ENCODE measurements at regions of chr16 and their contacts with region 1.

Region 1: DNA sequence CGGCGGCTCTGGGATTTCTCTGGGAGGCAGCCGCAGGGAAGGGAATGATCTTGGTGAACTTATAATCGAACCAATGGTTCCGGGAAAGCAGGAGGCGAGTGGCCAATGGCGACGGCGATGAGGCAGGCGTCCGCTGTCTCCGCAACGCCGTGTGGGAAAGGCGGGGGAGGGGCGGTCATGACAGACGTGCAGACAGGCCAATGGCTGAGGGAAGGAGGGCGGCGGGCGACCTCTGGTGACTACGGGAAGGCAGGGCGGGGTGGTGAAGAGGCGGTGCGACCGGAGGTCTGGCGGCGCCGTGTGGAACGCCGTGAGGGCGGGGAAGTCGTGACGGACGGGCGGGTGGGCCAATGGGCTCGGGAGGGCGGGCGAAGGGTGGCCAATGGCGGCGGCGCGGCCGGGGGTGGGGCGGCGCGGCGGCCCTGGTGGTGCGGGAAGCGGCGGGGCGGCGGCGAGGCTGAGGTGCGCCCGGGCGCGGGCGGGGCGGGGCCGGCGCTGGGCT is at the start of gene RAB40C:
- DNase-seq: peak; percentile 97
- H3K4me3 Mint-ChIP-seq: peak within 1 kb of the TSS; percentile 97
- H3K27ac Mint-ChIP-seq: peak within 1 kb of the TSS; percentile 100
- H3K4me1 Mint-ChIP-seq: peaks cover 26% of the 10 kb centered on the region
- H3K27me3 Mint-ChIP-seq: no peaks in the 10 kb centered on the region
- total RNA-seq, gene RAB40C: 14.0 and 15.2 TPM in 2 replicates

Region 2: DNA sequence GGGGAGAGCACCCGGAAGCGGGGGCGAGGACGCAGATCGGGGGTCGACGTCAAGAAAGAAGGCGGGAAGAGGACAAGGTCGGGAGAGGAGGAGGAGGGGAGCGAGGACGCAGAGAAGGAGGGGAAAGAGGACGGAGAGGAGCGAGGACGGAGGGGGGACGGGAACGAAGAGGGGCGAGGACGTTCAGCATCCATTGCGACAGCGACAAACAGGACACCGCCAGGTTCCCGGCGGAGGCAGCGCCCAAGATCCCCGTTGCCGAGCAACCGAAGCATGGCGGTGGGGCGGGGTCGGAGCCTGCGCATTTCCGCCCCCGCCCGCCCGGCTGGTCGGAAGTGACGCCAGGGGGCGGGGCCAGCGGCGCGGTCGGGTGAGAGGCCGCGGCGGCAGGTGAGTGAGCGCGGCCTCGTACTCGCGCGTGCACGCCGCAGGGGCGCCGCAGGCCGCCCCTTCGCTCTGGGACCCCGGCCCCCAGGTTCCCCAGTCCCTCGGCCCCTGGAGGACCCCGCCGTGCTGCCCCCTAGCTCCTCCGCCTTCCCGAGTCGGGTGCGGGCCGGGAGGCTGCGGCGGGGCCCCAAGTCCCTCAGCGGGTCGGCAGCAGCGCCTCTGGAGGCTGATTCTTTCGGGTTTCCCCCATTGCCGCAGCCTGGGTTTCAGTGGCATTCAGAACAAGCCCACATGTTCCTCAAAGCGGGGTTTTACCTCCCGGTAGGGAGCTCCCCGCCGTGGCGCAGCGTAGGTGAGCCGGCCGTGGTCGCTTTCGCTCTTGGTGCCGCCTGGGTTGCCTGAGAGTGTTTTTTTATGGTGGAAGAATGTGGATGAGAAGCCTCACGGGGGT is 355.0 kb before region 1 on chr16 and contains the start of gene FAM234A:
- intact Hi-C with region 1: loop called (anchors 1 kb)
- DNase-seq: peak; percentile 92
- H3K4me3 Mint-ChIP-seq: peak within 1 kb of the TSS; percentile 96
- H3K27ac Mint-ChIP-seq: peak within 1 kb of the TSS; percentile 98
- H3K4me1 Mint-ChIP-seq: peaks cover 14% of the 10 kb centered on the region
- H3K27me3 Mint-ChIP-seq: peaks cover 6% of the 10 kb centered on the region
- total RNA-seq, gene FAM234A: 18.0 and 21.2 TPM in 2 replicates

Region 3: DNA sequence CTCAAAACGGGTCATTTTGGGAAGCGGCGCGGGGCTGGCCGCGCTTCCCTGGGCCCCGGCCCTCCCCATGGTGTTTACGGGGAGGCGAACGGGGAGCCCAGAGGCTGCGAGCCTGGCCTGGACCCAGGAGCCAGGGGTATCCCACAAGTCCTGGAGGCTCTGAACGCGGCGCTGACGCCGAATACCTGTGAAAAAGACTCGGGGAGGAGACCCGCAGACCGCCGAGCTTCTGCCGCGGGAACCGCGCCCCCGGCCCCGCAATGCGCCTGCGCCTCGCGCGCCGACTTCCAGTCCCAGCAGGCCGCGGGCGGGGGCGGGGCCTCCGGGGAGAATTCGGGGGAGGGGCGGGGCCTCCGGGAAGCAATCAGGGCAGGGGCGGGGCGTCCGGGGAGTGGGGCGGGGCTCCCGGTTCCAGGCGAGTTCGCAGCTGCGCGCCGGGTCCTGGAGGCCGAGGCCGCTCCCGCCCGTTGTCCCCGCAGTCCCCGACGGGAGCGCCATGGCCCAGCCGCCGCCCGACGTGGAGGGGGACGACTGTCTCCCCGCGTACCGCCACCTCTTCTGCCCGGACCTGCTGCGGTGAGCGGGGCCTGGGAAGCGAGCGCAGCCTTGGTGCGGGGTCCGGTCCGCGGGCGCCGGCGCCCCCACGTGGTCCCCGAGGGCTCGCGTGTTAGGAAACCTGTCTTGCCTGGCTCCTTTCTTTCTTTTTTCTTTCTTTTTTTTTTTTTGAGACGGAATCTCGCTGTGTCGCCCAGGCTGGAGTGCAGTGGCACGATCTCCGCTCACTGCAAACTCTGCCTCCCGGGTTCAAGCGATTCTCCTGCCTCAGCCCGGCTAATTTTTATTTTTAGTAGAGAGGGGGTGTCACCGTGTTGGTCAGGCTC is 188.0 kb before region 1 on chr16 and contains the start of gene DECR2:
- intact Hi-C with region 1: loop called (anchors 1 kb)
- DNase-seq: peak; percentile 90
- H3K4me3 Mint-ChIP-seq: peak within 1 kb of the TSS; percentile 87
- H3K27ac Mint-ChIP-seq: peak within 1 kb of the TSS; percentile 58
- H3K4me1 Mint-ChIP-seq: peaks cover 11% of the 10 kb centered on the region
- H3K27me3 Mint-ChIP-seq: peaks cover 2% of the 10 kb centered on the region
- total RNA-seq, gene DECR2: 18.0 and 20.1 TPM in 2 replicates

Region 4: GRCh38 chr16:610513-611334 is 21.0 kb after region 1 on chr16:
- intact Hi-C with region 1: no loop called
- DNase-seq: no peak
- H3K4me3 Mint-ChIP-seq: no peak overlapping the region
- H3K27ac Mint-ChIP-seq: no peak overlapping the region
- H3K4me1 Mint-ChIP-seq: no peaks in the 10 kb centered on the region
- H3K27me3 Mint-ChIP-seq: no peaks in the 10 kb centered on the region

Region 5: DNA sequence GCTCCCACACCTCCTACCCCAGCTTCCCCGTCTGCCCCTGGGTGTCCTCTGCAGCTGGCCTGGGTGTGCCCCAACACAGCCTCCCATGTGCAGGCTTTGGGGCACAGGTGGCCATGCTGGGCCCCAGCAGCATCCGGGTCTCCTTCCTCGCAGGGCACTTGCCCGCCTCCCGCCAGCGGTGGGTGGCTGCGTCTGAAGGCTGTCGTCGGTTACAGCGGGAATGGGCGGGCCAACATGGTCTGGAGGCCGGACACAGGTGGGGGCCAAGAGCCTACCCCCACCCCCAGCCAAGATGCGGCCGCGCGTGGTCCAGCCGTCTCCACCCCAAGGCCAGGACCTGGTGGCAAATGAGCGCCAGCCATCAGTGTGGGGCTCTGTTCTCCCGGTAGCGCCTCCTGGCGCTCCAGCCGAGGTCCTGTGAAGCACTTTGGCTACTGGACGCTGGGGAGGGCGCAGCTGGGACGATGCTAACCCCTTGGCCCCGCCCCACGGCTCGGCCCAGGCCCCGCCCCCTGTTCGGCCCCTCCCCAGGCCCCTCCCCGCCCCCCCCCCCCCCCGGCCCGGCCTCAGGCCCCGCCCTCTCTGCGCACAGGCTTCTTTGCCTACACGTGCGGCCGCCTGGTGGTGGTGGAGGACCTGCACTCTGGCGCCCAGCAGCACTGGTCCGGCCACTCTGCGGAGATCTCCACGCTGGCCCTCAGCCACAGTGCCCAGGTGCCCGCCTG is 70.9 kb after region 1 on chr16:
- intact Hi-C with region 1: loop called (anchors 2 kb)
- DNase-seq: peak; percentile 53
- H3K4me3 Mint-ChIP-seq: peak overlapping the region; percentile 5
- H3K27ac Mint-ChIP-seq: no peak overlapping the region
- H3K4me1 Mint-ChIP-seq: no peaks in the 10 kb centered on the region
- H3K27me3 Mint-ChIP-seq: no peaks in the 10 kb centered on the region

Region 6: GRCh38 chr16:1492923-1493745 is 903.4 kb after region 1 on chr16 and contains the start of gene TELO2:
- intact Hi-C with region 1: loop called (anchors 5 kb)
- DNase-seq: peak; percentile 85
- H3K4me3 Mint-ChIP-seq: peak within 1 kb of the TSS; percentile 92
- H3K27ac Mint-ChIP-seq: peak within 1 kb of the TSS; percentile 98
- H3K4me1 Mint-ChIP-seq: peaks cover 8% of the 10 kb centered on the region
- H3K27me3 Mint-ChIP-seq: no peaks in the 10 kb centered on the region
- total RNA-seq, gene TELO2: 94.1 and 95.3 TPM in 2 replicates